Endothelial cell of umbilical vein (primary cell): ENCODE measurements at regions of chr5 and their contacts with region 1.

Region 1: GRCh38 chr5:93800988-93801811 is 59.8 kb upstream of the POU5F2 start:
- DNase-seq: peak; percentile 68
- H3K4me3 ChIP-seq: no peak overlapping the region
- H3K27ac ChIP-seq: no peak overlapping the region
- H3K4me1 ChIP-seq: peaks cover 2% of the 10 kb centered on the region
- H3K27me3 ChIP-seq: no peaks in the 10 kb centered on the region
- CTCF ChIP-seq: peak; percentile 41
- POLR2A ChIP-seq: no peak

Region 2: DNA sequence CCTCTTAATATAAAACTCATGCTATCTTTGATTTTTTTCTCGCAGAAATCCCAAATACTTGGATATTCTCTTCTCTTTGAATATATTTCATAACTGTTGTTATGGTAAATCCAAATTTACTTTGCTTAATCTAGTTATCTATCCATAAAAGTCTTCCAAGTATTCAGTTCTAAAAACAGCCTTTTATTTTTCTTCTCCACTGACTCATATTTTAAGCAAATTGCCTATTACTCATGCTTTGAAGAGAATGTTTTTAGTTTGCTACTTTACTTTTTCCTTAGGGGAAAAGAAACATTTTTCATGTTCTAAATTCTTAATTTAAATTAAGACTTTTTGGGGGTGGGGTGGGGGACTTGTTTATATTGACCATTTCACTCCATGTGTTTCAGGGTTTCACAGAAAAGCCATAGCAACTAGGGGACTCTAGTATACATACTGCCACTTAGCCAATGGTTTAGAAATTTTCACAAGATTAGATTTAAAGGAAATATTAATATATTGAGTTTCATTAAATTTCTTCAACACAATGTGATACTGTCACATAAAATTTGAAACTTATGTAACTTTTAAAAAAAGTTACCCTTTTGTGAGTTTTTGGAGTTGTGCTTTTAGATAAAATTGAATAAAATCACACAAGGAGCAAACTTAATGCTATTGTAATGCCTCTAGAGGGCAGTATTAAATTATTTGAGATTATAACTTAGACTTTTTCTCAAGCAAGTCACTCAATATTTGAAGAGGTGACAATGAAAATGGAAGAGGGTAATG is 1872.3 kb before region 1 on chr5:
- CTCF ChIA-PET with region 1: interaction called, 10 read pairs
- POLR2A ChIA-PET with region 1: no interaction called
- dilution Hi-C with region 1: no loop called
- intact Hi-C with region 1: no loop called
- DNase-seq: peak; percentile 28
- H3K4me3 ChIP-seq: no peak overlapping the region
- H3K27ac ChIP-seq: no peak overlapping the region
- H3K4me1 ChIP-seq: no peaks in the 10 kb centered on the region
- H3K27me3 ChIP-seq: no peaks in the 10 kb centered on the region
- CTCF ChIP-seq: peak in 1 of 2 donors; percentile 25
- POLR2A ChIP-seq: no peak

Region 3: DNA sequence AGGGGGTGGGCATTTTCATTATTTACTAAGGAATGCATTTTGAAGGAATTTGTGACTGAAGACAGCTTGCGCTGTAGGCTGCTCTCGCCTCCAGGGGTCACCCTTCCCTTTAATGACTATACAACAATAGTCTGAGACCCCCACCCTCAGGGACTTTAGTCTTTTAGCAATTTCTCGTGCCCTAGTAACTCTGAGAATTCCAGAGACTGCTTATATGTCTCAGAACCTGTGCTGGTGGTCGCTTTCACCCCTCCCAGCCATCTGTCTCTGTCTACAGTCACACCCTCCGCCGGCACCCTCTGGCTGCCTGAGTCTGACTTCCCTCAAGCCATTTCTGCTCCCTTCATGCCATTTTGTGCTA is 891.6 kb before region 1 on chr5:
- CTCF ChIA-PET with region 1: interaction called, 59 read pairs
- POLR2A ChIA-PET with region 1: no interaction called
- dilution Hi-C with region 1: no loop called
- intact Hi-C with region 1: loop called (anchors 2 kb)
- DNase-seq: peak; percentile 53
- H3K4me3 ChIP-seq: no peak overlapping the region
- H3K27ac ChIP-seq: no peak overlapping the region
- H3K4me1 ChIP-seq: peaks cover 16% of the 10 kb centered on the region
- H3K27me3 ChIP-seq: no peaks in the 10 kb centered on the region
- CTCF ChIP-seq: peak; percentile 68 to 74
- POLR2A ChIP-seq: no peak

Region 4: DNA sequence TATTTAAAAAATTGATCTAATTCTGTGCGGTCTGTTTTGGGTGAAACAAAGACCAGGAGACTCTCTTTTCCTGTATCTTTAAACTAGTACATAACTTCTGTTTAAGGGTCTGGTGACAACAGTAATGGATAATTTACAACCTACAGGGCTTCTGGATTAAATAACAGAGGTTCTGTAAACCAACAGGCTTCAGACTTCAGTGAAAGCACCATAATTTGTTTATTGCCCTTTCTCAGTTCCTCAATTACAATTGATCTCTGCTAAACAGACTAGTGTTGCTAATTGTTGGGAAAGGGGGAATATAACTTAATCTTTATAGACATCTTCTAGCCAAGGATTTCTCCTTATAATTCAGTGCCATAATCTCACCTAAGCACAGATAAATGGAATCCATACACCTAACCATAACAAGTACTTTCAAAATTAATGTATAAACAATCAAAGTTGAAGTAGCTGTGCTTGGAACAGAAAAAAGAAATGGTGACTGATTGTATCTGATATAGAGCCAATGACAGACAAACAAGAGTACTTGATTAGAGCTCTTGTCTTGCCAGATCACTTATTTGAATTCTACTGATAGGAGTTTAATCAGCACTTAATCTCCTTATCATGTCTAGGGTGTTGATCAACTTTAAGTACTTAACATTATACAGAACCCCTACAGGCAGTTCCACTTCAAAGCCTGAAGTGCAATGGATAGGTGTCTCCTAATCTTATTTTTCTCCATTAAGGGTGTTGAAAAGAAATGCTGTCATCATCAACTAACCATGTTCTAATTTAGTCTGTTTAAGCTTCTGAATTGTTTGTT is 756.1 kb before region 1 on chr5:
- CTCF ChIA-PET with region 1: no interaction called
- POLR2A ChIA-PET with region 1: no interaction called
- dilution Hi-C with region 1: no loop called
- intact Hi-C with region 1: no loop called
- DNase-seq: no peak
- H3K4me3 ChIP-seq: no peak overlapping the region
- H3K27ac ChIP-seq: no peak overlapping the region
- H3K4me1 ChIP-seq: no peaks in the 10 kb centered on the region
- H3K27me3 ChIP-seq: no peaks in the 10 kb centered on the region
- CTCF ChIP-seq: no peak
- POLR2A ChIP-seq: no peak

Region 5: GRCh38 chr5:93151121-93151520 is 650.1 kb before region 1 on chr5:
- CTCF ChIA-PET with region 1: no interaction called
- POLR2A ChIA-PET with region 1: no interaction called
- dilution Hi-C with region 1: no loop called
- intact Hi-C with region 1: no loop called
- DNase-seq: peak; percentile 83
- H3K4me3 ChIP-seq: no peak overlapping the region
- H3K27ac ChIP-seq: peak overlapping the region; percentile 66
- H3K4me1 ChIP-seq: peaks cover 17% of the 10 kb centered on the region
- H3K27me3 ChIP-seq: no peaks in the 10 kb centered on the region
- CTCF ChIP-seq: no peak
- POLR2A ChIP-seq: no peak

Region 6: DNA sequence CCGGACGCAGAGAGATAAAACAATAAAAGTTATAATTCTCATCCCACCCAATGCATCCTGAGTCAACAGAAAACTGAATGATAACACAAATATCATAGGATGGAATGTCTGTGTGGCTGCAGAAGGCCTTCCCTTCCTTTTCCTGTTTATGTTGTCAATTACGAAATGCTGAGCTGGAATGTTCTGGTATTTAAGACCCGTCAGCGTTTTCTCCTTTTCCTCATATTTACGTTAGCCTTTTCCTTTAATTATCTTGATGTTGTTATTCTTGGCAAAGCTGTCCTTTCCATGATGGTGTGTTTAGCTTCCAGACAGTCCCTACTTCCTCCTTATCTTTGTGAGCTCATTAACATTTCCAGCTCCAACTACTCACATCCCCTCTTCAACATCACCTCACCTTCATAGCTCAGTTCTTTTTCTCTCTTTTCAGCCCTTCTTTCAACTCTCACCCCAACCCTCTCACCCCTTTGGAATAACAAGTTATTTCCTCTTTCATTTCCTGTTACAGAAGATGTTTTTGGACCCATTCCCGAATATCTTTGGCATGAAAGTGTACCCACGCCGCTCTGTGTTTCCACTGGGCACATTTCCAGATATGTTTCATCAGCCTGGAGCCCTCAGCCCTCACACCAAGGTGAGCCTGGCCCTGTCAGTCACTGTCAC is 441.8 kb before region 1 on chr5:
- CTCF ChIA-PET with region 1: interaction called, 10 read pairs
- POLR2A ChIA-PET with region 1: no interaction called
- dilution Hi-C with region 1: no loop called
- intact Hi-C with region 1: no loop called
- DNase-seq: peak; percentile 98
- H3K4me3 ChIP-seq: peak overlapping the region in 2 of 3 experiments; percentile 10 to 40
- H3K27ac ChIP-seq: peak overlapping the region; percentile 91
- H3K4me1 ChIP-seq: peaks cover 49% of the 10 kb centered on the region
- H3K27me3 ChIP-seq: no peaks in the 10 kb centered on the region
- CTCF ChIP-seq: no peak
- POLR2A ChIP-seq: peak; percentile 91

Region 7: GRCh38 chr5:93607367-93608258 is 193.6 kb before region 1 on chr5:
- CTCF ChIA-PET with region 1: interaction called, 80 read pairs
- POLR2A ChIA-PET with region 1: no interaction called
- dilution Hi-C with region 1: no loop called
- intact Hi-C with region 1: loop called (anchors 1 kb)
- DNase-seq: peak; percentile 74
- H3K4me3 ChIP-seq: no peak overlapping the region
- H3K27ac ChIP-seq: no peak overlapping the region
- H3K4me1 ChIP-seq: peaks cover 6% of the 10 kb centered on the region
- H3K27me3 ChIP-seq: peaks cover 71 to 98% of the 10 kb centered on the region in 2 experiments
- CTCF ChIP-seq: peak; percentile 28 to 59
- POLR2A ChIP-seq: no peak

Region 8: DNA sequence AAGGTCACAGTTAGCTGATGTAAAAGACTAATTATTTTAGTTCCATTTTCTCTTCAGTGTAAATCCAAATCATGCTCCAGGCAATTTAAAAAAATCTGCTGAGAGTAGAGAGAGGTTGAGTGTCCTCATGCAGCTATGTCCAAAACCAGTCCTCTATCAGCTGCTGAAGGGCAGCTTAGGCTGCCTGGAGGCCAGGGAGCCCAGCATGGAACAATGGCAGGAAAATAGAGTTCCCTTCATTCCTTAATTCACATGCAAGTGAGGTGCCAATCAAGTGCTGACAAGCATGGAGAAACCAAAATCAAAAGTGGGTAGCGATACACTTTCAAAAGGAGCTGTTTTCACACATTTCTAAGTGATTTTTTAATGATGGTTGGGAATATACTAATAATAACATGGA is 18.5 kb after region 1 on chr5:
- CTCF ChIA-PET with region 1: interaction called, 15 read pairs
- POLR2A ChIA-PET with region 1: no interaction called
- dilution Hi-C with region 1: no loop called
- intact Hi-C with region 1: no loop called
- DNase-seq: no peak
- H3K4me3 ChIP-seq: no peak overlapping the region
- H3K27ac ChIP-seq: no peak overlapping the region
- H3K4me1 ChIP-seq: no peaks in the 10 kb centered on the region
- H3K27me3 ChIP-seq: no peaks in the 10 kb centered on the region
- CTCF ChIP-seq: no peak
- POLR2A ChIP-seq: no peak

Region 9: GRCh38 chr5:94130077-94130476 is 328.9 kb after region 1 on chr5:
- CTCF ChIA-PET with region 1: no interaction called
- POLR2A ChIA-PET with region 1: no interaction called
- dilution Hi-C with region 1: no loop called
- intact Hi-C with region 1: no loop called
- DNase-seq: no peak
- H3K4me3 ChIP-seq: no peak overlapping the region
- H3K27ac ChIP-seq: no peak overlapping the region
- H3K4me1 ChIP-seq: no peaks in the 10 kb centered on the region
- H3K27me3 ChIP-seq: peaks cover 0 to under 1% of the 10 kb centered on the region in 2 experiments
- CTCF ChIP-seq: no peak
- POLR2A ChIP-seq: no peak

Region 10: DNA sequence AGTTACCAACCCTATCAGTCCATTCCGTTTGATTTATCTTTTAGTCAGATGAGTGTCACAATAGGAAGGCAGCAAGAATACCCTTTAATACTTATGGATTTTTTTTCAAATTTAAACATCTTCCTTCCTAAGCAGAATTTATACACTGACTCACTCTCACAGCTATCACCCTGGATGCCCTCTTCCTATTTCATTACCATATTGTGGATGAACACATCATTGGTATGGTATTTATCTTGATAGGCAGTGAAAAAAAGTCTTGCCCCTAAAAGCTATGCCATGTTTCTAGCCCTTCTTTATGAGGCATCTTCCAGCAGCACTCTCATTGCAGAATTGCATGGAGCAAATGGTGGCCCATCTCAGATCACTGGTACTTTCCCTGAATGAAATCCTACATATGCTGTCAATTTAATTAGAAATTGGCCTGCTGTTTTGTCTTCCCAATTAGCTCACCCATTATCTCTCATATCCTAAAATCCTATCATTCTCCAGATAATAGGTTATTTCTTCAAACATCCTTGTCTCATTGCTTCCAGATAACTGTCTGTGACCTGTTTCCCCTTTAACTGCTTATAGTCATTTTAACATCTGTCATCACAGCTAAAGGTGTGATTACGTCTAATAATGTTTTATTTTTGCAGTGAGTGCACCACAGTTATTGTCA is 373.7 kb after region 1 on chr5:
- CTCF ChIA-PET with region 1: no interaction called
- POLR2A ChIA-PET with region 1: no interaction called
- dilution Hi-C with region 1: no loop called
- intact Hi-C with region 1: no loop called
- DNase-seq: no peak
- H3K4me3 ChIP-seq: no peak overlapping the region
- H3K27ac ChIP-seq: no peak overlapping the region
- H3K4me1 ChIP-seq: no peaks in the 10 kb centered on the region
- H3K27me3 ChIP-seq: no peaks in the 10 kb centered on the region
- CTCF ChIP-seq: no peak
- POLR2A ChIP-seq: no peak